Activated CD4-positive, alpha-beta T cell treated with anti-CD3 and anti-CD28 coated beads, Interleukin-2, amount 10 ng/mL, durations not matched to agents 24 days and 14 days (primary cell): ENCODE measurements at regions of chr2 and their contacts with region 1.

Region 1: GRCh38 chr2:69306822-69307578 is 80.0 kb downstream of the GFPT1 start:
- DNase-seq: peak; percentile 89
- H3K4me3 Mint-ChIP-seq: peak overlapping the region; percentile 78
- H3K27ac Mint-ChIP-seq: no peak overlapping the region
- H3K4me1 Mint-ChIP-seq: peaks cover 12% of the 10 kb centered on the region
- H3K27me3 Mint-ChIP-seq: peaks cover 39% of the 10 kb centered on the region

Region 2: GRCh38 chr2:68943581-68944568 is 363.1 kb before region 1 on chr2:
- intact Hi-C with region 1: loop called (anchors 1 kb)
- DNase-seq: peak; percentile 87
- H3K4me3 Mint-ChIP-seq: no peak overlapping the region
- H3K27ac Mint-ChIP-seq: no peak overlapping the region
- H3K4me1 Mint-ChIP-seq: peaks cover 2% of the 10 kb centered on the region
- H3K27me3 Mint-ChIP-seq: peaks cover 53% of the 10 kb centered on the region

Region 3: DNA sequence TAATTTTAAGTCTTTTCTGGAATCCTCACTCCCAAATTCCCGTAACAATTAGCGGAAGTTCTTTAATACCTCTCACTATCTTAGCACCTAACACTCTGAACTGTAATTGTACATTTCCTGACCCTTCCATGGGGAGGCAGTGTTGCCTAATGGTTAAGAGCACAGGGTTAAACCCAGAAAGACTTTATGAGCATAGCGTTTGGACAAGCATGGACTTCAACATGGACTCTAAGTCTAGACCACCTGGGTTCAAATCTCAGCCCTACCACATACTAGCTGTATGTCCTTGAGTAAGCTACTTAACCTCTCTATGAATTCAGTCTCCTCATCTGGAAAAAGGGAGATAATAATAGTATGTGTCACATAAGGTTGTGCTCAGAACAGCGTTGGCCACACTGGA is 281.0 kb before region 1 on chr2:
- intact Hi-C with region 1: loop called (anchors 1 kb)
- DNase-seq: peak; percentile 76
- H3K4me3 Mint-ChIP-seq: no peak overlapping the region
- H3K27ac Mint-ChIP-seq: no peak overlapping the region
- H3K4me1 Mint-ChIP-seq: no peaks in the 10 kb centered on the region
- H3K27me3 Mint-ChIP-seq: peaks cover 29% of the 10 kb centered on the region

Region 4: GRCh38 chr2:69272803-69273471 is 34.1 kb before region 1 on chr2:
- intact Hi-C with region 1: no loop called
- DNase-seq: no peak
- H3K4me3 Mint-ChIP-seq: no peak overlapping the region
- H3K27ac Mint-ChIP-seq: no peak overlapping the region
- H3K4me1 Mint-ChIP-seq: no peaks in the 10 kb centered on the region
- H3K27me3 Mint-ChIP-seq: peaks cover 44% of the 10 kb centered on the region